Posterior vena cava (tissue), 2 donors: ENCODE measurements at regions of chr1 and their contacts with region 1.

Region 1: DNA sequence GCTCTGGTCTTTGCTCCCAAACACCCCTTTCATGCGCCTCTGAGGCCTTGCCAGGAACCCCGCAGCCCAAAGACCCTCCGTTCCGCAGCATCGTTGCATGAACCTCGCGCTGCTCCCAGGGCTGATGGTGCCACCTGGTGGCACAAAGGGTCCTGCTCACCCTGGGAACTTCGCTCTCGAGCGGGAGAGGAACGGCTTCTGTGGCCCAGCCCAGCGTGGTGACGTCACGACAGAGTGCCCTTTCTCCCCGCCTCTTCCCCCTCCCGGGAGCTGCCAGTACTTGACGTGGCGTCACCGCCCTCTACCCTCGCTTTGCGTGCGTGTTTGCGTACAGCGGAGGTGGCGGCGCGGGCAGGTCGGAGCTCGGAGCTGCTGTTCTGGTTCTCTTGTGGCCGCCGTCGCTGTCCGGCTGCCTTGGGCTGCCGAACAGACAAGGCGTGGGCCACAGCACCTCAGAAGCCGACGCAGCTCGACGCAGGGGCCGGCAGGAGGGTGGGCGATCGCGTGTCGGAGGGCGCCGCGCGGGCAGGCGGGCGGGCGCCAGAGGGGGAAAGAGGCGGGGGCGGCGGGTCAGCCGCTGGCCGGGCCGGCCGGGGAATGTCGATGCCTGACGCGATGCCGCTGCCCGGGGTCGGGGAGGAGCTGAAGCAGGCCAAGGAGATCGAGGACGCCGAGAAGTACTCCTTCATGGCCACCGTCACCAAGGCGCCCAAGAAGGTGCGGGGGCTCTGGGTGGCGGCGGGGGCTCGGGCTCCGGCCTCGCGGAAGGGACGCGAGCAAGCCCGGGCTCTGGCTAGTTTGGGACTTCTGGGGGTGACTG is at the start of gene AHCYL1:
- DNase-seq: peak; percentile 100
- total RNA-seq, gene AHCYL1: 64.9 to 67.3 TPM

Region 2: DNA sequence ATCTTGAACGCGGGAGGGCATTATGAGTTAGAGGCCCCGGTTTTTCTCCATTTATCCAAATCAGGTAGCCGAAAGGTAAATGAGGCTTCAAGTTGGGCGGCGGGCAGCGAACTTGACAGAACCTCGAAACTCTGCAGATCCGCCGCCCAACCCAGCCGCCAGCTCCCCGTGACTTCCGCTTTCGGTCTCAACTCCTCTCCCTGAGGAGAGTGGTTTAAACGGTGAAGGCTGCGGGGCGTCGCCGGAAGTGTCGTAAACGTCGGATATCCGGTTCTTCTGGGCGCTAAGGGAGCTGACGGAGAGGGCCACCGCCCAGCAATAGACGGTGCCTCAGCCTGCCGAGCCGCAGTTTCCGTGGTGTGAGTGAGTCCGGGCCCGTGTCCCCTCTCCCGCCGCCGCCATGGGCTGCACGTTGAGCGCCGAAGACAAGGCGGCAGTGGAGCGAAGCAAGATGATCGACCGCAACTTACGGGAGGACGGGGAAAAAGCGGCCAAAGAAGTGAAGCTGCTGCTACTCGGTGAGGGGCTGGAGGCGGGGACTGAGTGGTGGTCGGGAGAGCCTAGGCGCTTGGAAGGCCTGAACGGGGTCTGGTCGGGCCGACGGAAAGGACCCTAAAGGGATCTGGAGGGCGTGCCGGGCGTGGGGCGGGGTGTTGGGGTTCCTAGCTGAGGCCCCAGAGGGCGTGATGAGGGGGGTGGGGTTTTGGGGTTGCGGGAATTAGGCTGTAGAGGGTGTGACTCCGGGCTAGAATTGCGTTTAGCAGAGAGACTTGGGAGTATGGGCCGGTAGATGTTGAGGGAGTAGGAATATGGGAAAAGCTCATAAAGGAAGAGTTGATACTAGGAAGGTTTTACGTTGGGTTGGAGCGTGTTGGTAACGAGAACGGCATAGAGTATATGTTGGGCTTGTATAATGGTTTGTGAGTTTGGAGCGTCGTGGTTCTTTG is 436.1 kb before region 1 on chr1 and contains the start of gene GNAI3:
- intact Hi-C with region 1: loop called in 1 of 2 experiments (anchors 10 kb)
- DNase-seq: peak; percentile 99
- total RNA-seq, gene GNAI3: 6.8 to 7.5 TPM

Region 3: GRCh38 chr1:109630081-109630897 is 354.4 kb before region 1 on chr1:
- intact Hi-C with region 1: loop called in 1 of 2 experiments (anchors 10 kb)
- DNase-seq: no peak

Region 4: DNA sequence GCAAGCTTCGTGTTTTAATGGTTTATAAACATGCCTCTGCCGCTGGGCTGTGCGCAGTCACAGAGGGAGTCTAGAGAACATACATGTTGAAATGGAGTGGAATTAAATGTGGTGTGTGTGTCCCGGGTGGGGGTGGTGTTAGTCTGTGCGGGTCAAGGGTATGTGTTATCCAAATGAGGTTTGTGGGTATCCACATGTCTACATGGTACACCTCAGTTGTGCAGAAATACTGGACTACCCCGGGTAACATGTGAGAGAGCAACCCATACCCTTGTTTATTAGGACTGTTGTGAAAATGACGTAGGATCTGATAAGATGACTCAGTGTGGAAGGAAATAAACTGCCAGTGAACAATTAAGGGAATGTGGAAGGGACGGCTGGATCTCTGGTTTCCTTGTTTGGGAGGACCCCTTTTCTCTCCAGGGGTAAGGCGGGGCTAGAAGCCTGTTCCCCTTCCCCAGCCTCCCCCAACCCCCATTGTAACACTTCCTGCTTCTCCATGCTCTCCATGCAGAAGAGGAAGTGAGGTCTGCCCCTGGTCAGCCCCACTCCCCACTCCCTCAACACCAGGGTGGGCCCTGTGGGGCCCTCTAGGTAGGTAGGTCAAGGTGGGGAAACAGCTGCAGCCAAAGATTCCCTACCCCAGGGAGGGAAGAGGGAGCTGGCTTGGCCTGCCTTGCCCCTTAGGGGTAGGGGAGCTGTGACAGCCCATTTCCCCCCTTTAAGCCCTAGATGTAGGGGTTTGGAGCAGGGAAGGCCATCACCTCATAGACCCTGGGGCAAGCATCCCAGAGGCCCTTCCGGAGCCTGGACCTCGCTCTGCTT is 221.6 kb before region 1 on chr1:
- intact Hi-C with region 1: no loop called
- DNase-seq: peak; percentile 75

Region 5: GRCh38 chr1:109773146-109773899 is 211.3 kb before region 1 on chr1:
- intact Hi-C with region 1: loop called (anchors 2 kb)
- DNase-seq: peak; percentile 92

Region 6: GRCh38 chr1:109923131-109923945 is 61.3 kb before region 1 on chr1:
- intact Hi-C with region 1: loop called (anchors 5 kb)
- DNase-seq: no peak